Ascending aorta (tissue), 2 donors: ENCODE measurements at regions of chr13 and their contacts with region 1.

Region 1: GRCh38 chr13:110396913-110397381 is 89.9 kb downstream of the COL4A2 start:
- DNase-seq: peak; percentile 93 to 99
- H3K4me3 ChIP-seq: peak overlapping the region; percentile 37 to 41
- H3K27ac ChIP-seq: peak overlapping the region; percentile 98 to 99
- H3K4me1 ChIP-seq: peaks cover 26 to 78% of the 10 kb centered on the region in 2 donors
- H3K27me3 ChIP-seq: no peaks in the 10 kb centered on the region
- CTCF ChIP-seq: no peak

Region 2: DNA sequence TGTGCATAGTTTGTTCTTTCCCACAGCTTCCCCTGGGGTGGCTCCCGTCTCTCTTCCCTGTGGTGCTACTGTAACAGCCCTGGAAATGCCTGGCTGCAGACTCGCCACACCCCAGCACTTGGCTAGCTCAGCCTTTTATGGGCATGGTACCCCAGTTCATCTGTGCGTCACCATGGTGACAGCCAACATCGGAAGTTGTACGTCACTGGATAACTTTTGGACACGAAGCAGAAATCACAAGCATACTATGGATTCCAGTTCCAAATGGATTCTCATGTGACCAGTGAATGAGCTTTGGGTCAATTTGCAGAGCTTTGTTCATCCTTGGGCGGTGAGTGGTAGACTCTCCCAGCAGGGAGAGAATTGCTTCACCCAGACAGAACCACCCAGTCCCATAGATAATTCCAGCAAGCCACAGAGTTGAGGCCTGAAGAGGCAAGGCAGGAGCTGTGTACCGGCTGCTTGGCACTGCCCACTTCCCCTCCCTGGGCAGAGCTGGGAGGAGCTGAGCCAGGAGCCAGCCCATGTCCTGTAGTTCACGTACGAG is 35.5 kb before region 1 on chr13:
- intact Hi-C with region 1: loop called (anchors 2 kb)
- DNase-seq: peak; percentile 54 to 97
- H3K4me3 ChIP-seq: no peak overlapping the region
- H3K27ac ChIP-seq: peak overlapping the region; percentile 81 to 92
- H3K4me1 ChIP-seq: peaks cover 24 to 49% of the 10 kb centered on the region in 2 donors
- H3K27me3 ChIP-seq: no peaks in the 10 kb centered on the region
- CTCF ChIP-seq: peak in 1 of 3 experiments; percentile 9